ENCODE measurements at regions of chr3 and their contacts with region 1.

Region 1: GRCh38 chr3:53300826-53301225 is 45.0 kb upstream of the TKT start:
- DNase-seq: no peak
- H3K4me3 ChIP-seq: no peak overlapping the region
- H3K27ac ChIP-seq: no peak overlapping the region
- H3K4me1 ChIP-seq: no peaks in the 10 kb centered on the region
- H3K27me3 ChIP-seq: no peaks in the 10 kb centered on the region
- CTCF ChIP-seq: no peak
- EP300 ChIP-seq: no peak
- POLR2A ChIP-seq: no peak
- RAD21 ChIP-seq: no peak

Region 2: DNA sequence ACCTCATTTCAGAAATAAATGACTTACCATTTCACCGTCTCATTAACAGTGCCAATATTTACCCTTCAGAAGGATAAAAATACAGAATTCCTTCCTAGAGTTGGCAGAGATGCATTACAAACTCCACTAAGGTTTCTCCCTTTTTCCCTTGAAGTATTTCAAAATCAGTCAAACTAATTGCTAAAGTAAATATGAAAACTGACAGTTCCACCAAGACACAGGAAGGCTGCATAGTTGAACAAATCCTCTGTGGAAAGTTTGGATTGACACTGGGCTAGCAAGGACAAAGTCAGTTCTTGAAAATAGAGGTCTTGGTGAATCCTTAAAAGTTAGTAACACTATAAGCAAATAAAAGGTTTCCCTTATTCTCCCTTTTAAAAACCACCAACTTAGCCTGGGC is 12.0 kb after region 1 on chr3:
- CTCF ChIA-PET with region 1: interaction called, 11 read pairs
- POLR2A ChIA-PET with region 1: no interaction called
- DNase-seq: no peak
- H3K4me3 ChIP-seq: no peak overlapping the region
- H3K27ac ChIP-seq: no peak overlapping the region
- H3K4me1 ChIP-seq: no peaks in the 10 kb centered on the region
- H3K27me3 ChIP-seq: no peaks in the 10 kb centered on the region
- CTCF ChIP-seq: no peak
- EP300 ChIP-seq: no peak
- POLR2A ChIP-seq: no peak
- RAD21 ChIP-seq: no peak

Measured in H1 (cell line).